Ovary (tissue), 10 donors: ENCODE measurements at regions of chr20 and their contacts with region 1.

Region 1: GRCh38 chr20:16801919-16802911 is 54.1 kb downstream of the OTOR start:
- DNase-seq: peak; percentile 49 to 82 (median 75)
- H3K4me3 ChIP-seq: no peak overlapping the region
- H3K27ac ChIP-seq: no peak overlapping the region
- H3K4me1 ChIP-seq: no peaks in the 10 kb centered on the region
- H3K27me3 ChIP-seq: no peaks in the 10 kb centered on the region
- CTCF ChIP-seq: peak; percentile 55 to 80 (median 67)
- EP300 ChIP-seq: no peak
- POLR2A ChIP-seq: no peak

Region 2: GRCh38 chr20:16607364-16608276 is 194.6 kb before region 1 on chr20:
- intact Hi-C with region 1: no loop called
- DNase-seq: no peak
- H3K4me3 ChIP-seq: no peak overlapping the region
- H3K27ac ChIP-seq: no peak overlapping the region
- H3K4me1 ChIP-seq: peaks cover 7% of the 10 kb centered on the region
- H3K27me3 ChIP-seq: no peaks in the 10 kb centered on the region
- CTCF ChIP-seq: no peak
- EP300 ChIP-seq: no peak
- POLR2A ChIP-seq: no peak

Region 3: GRCh38 chr20:16729565-16730456 is 72.4 kb before region 1 on chr20 and contains the start of gene SNRPB2:
- intact Hi-C with region 1: no loop called
- DNase-seq: peak; percentile 89 to 94 (median 91)
- H3K4me3 ChIP-seq: peak within 1 kb of the TSS; percentile 97
- H3K27ac ChIP-seq: peak within 1 kb of the TSS; percentile 47 to 50
- H3K4me1 ChIP-seq: peaks cover 2% of the 10 kb centered on the region
- H3K27me3 ChIP-seq: no peaks in the 10 kb centered on the region
- CTCF ChIP-seq: no peak
- EP300 ChIP-seq: no peak
- POLR2A ChIP-seq: peak; percentile 64
- total RNA-seq, gene SNRPB2: 20.6 to 53.4 (median 44.1) TPM

Region 4: GRCh38 chr20:16922834-16923233 is 120.6 kb after region 1 on chr20:
- intact Hi-C with region 1: no loop called
- DNase-seq: no peak
- H3K4me3 ChIP-seq: no peak overlapping the region
- H3K27ac ChIP-seq: no peak overlapping the region
- H3K4me1 ChIP-seq: no peaks in the 10 kb centered on the region
- H3K27me3 ChIP-seq: no peaks in the 10 kb centered on the region
- CTCF ChIP-seq: no peak
- EP300 ChIP-seq: no peak
- POLR2A ChIP-seq: no peak

Region 5: GRCh38 chr20:17431621-17432364 is 629.6 kb after region 1 on chr20:
- intact Hi-C with region 1: loop called (anchors 2 to 5 kb)
- DNase-seq: peak; percentile 64 to 78 (median 74)
- H3K4me3 ChIP-seq: no peak overlapping the region
- H3K27ac ChIP-seq: no peak overlapping the region
- H3K4me1 ChIP-seq: no peaks in the 10 kb centered on the region
- H3K27me3 ChIP-seq: no peaks in the 10 kb centered on the region
- CTCF ChIP-seq: peak; percentile 65 to 82 (median 80)
- EP300 ChIP-seq: no peak
- POLR2A ChIP-seq: no peak

Region 6: DNA sequence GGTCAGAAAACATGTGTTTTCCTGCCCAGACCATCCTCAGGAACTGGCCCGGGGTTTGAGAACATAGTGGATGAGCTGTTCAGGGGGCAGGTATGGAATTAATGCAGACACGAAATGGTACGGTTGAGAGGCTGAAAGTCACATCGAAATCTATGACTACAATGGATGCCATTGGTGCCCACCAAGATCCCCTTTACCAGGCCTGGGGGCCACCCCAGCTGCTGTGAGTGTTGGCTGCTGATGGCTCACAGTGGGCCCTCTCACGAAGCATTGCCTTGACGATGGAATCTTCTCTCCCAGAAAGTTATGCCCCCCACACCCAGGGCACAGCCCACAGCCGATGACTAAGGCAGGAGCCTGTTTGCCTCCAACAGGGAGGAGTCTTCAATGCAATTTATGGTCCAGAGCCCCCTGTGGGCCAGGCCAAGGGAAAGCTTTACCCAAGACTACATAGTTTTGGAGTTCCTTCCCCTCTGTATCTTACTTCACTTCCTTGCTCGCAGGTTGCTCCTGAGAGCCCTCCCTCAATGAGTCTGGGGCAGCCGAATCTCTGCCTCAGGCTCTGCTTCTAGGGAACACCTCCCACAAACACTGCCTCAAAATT is 636.3 kb after region 1 on chr20:
- intact Hi-C with region 1: loop called in 2 of 4 experiments (anchors 2 to 5 kb)
- DNase-seq: no peak
- H3K4me3 ChIP-seq: no peak overlapping the region
- H3K27ac ChIP-seq: no peak overlapping the region
- H3K4me1 ChIP-seq: no peaks in the 10 kb centered on the region
- H3K27me3 ChIP-seq: no peaks in the 10 kb centered on the region
- CTCF ChIP-seq: no peak
- EP300 ChIP-seq: no peak
- POLR2A ChIP-seq: no peak

Region 7: DNA sequence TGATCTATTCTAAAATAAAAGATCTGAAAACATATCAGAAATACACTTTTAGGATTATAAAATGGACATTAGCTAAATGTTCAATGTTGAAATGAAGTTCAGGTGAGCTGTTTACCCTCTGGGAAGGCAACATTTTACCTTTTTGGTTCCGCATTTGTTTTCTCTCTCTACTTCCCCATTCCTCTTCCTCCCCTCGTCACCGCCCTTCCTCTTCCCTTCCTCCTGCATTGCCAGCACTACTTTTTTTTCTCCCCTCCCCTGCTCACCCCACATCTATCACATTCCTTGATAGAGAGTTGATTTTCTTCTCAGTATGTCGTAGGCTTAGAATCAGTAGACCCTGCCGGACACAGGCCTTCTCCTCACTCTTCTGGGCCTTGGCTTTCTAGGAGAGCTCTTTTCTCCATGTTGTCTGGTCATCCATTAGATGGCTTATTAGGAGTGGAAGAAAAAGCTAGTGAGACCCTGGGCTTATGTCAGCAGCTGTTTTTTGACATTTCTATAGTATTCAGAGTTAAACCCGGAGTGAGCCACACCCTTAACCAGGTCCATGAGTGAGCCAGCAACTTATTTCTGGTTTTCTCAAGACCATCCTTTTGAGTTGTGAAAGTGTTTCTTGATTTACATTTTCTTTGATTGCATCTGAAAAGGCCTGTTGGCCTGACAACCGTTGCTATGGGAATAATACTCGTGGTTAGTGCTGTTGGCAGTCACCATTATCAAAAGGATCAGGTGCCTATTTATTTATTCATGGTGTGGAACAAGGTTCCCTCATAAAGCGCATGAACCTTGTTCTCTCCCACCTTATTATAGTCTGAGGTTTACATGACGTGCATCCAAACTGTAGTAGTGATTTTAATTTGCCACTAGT is 1876.6 kb after region 1 on chr20:
- intact Hi-C with region 1: no loop called
- DNase-seq: no peak
- H3K4me3 ChIP-seq: no peak overlapping the region
- H3K27ac ChIP-seq: no peak overlapping the region
- H3K4me1 ChIP-seq: peaks cover 9% of the 10 kb centered on the region
- H3K27me3 ChIP-seq: no peaks in the 10 kb centered on the region
- CTCF ChIP-seq: no peak
- EP300 ChIP-seq: no peak
- POLR2A ChIP-seq: no peak